Pancreas (tissue), 10 donors: ENCODE measurements at regions of chr19 and their contacts with region 1.

Region 1: DNA sequence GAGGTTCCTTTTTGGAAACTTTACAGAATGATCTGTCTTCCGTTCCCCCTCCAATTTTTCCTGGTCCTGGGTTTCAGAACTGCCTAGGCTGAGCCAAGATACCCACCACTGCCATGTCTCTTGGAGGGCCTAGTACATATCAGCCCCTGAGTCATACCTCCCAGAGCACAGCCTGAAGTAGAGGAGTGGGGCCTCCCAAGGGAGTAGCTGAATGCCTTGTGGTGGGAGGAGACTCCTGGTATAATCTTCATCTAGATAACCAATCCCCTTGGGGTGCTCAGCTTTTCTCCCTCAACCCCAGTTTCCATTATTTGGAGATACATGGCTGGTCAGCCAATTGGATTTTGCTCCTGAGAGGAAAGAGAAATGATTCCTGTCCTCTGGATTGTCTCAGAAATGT is 30.3 kb downstream of the ZNF763 start:
- DNase-seq: no peak
- ATAC-seq: no peak
- H3K4me3 ChIP-seq: no peak overlapping the region
- H3K27ac ChIP-seq: no peak overlapping the region
- H3K4me1 ChIP-seq: no peaks in the 10 kb centered on the region
- H3K27me3 ChIP-seq: no peaks in the 10 kb centered on the region
- CTCF ChIP-seq: no peak

Region 2: DNA sequence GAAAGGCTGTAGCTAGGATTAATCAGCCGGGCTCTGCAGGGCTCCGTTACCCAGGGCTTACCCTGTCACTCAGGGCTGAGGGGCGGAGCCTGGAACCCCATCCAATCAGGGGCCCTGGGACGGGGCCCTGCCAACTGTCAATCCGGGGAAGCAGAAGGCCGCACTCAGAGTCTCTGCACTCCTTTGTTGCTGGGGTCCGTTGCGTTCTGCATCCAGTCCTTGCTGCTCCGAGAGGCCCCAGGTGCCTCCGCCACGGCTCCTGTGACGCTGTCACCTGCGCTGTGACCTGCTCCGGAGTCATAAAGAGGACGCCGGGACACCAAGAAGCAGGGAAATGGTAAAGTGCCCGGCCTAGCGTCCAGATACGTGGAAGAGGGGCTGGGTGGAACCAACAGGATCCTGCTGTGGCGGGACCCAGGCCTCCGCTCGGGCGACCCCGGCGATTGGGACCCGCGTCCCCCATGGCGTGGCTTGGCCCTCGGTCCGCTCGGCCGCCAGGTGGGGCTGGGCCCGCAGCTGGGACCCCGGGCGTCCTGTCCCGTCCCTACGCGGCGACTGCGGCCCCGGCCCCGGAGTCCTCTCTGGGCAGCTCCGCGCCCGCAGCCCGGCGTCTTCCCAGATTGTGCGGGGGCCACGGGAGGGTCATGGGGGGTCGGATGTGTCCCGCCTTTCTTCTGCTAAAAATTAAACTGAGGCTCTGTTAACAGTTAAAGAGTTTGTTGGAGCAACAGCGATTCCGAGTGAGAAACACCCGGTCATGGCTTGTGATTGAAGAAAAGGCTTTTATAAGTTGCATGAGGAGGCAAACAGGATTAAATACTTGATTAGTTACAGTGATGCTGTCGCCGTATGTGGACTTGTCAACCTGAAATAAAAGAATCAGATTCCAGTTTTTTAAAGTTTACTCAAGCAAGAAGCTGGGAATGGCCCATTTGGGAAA is 196.5 kb before region 1 on chr19 and contains the start of gene ZNF491:
- intact Hi-C with region 1: loop called in 1 of 3 experiments (anchors 10 kb)
- DNase-seq: peak; percentile 91 to 97 (median 94)
- ATAC-seq: peak; percentile 96 to 99 (median 96)
- H3K4me3 ChIP-seq: peak within 1 kb of the TSS; percentile 57 to 86 (median 66)
- H3K27ac ChIP-seq: peak within 1 kb of the TSS; percentile 86 to 89 (median 86)
- H3K4me1 ChIP-seq: peaks cover 0 to 6% (median 6%) of the 10 kb centered on the region in 3 donors
- H3K27me3 ChIP-seq: no peaks in the 10 kb centered on the region
- CTCF ChIP-seq: peak in 1 of 4 donors; percentile 7
- total RNA-seq, gene ZNF491: 0.95 to 3.3 (median 1.4) TPM

Region 3: GRCh38 chr19:11872624-11873023 is 122.5 kb before region 1 on chr19:
- intact Hi-C with region 1: loop called in 1 of 3 experiments (anchors 10 kb)
- DNase-seq: no peak
- ATAC-seq: no peak
- H3K4me3 ChIP-seq: no peak overlapping the region
- H3K27ac ChIP-seq: no peak overlapping the region
- H3K4me1 ChIP-seq: no peaks in the 10 kb centered on the region
- H3K27me3 ChIP-seq: no peaks in the 10 kb centered on the region
- CTCF ChIP-seq: no peak